Prostate gland (tissue), 2 donors: ENCODE measurements at regions of chr2 and their contacts with region 1.

Region 1: GRCh38 chr2:74529357-74530238 is at the starts of genes AUP1 and HTRA2:
- DNase-seq: peak; percentile 99
- H3K4me3 ChIP-seq: peak within 1 kb of the TSS; percentile 63 to 89
- H3K27ac ChIP-seq: peak within 1 kb of the TSS; percentile 67 to 82
- H3K4me1 ChIP-seq: peaks cover 7% of the 10 kb centered on the region
- H3K27me3 ChIP-seq: no peaks in the 10 kb centered on the region
- CTCF ChIP-seq: peak in 2 of 4 experiments; percentile 30 to 31
- POLR2A ChIP-seq: peak; percentile 47
- total RNA-seq, gene AUP1: 101 to 124 TPM
- total RNA-seq, gene HTRA2: 19.1 to 37.9 TPM

Region 2: GRCh38 chr2:74482801-74483674 is 46.6 kb before region 1 on chr2 and contains the starts of genes CCDC142 and TTC31:
- intact Hi-C with region 1: loop called (anchors 1 kb)
- DNase-seq: peak; percentile 96
- H3K4me3 ChIP-seq: peak within 1 kb of the TSS; percentile 74 to 84
- H3K27ac ChIP-seq: peak within 1 kb of the TSS; percentile 83 to 90
- H3K4me1 ChIP-seq: peaks cover 13% of the 10 kb centered on the region
- H3K27me3 ChIP-seq: no peaks in the 10 kb centered on the region
- CTCF ChIP-seq: peak; percentile 61 to 94 (median 90)
- POLR2A ChIP-seq: peak; percentile 26
- total RNA-seq, gene CCDC142: 28.0 to 28.3 TPM
- total RNA-seq, gene TTC31: 24.0 to 27.6 TPM